CD8-positive, alpha-beta memory T cell (primary cell): ENCODE measurements at regions of chr6 and their contacts with region 1.

Region 1: DNA sequence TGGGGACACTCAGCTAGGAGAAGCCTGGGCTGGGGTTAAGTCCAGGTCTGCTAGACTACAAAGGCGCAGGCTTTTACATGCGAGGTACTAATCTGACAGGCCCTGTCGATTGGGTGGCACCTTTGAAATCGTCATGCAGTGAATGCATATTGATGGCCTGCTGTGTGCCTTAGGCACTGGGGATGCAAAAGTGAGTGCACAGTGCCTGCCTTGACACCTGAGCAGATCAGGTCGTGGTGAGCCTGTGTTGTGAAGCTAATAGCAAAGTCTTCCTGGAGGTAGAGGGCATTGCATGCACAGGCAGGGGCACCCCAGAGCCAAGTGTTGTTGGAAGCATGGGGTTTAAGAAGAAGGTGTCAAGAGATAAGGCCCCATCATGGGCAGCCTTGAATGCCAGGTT is 16.9 kb downstream of the LRRC1 start:
- DNase-seq: no peak
- H3K4me3 ChIP-seq: no peak overlapping the region
- H3K4me3 Mint-ChIP-seq: no peak overlapping the region
- H3K27ac ChIP-seq: no peak overlapping the region
- H3K27ac Mint-ChIP-seq: no peak overlapping the region
- H3K4me1 ChIP-seq: no peaks in the 10 kb centered on the region
- H3K4me1 Mint-ChIP-seq: no peaks in the 10 kb centered on the region
- H3K27me3 ChIP-seq: no peaks in the 10 kb centered on the region
- H3K27me3 Mint-ChIP-seq: peaks cover 0 to 3% of the 10 kb centered on the region in 2 donors

Region 2: DNA sequence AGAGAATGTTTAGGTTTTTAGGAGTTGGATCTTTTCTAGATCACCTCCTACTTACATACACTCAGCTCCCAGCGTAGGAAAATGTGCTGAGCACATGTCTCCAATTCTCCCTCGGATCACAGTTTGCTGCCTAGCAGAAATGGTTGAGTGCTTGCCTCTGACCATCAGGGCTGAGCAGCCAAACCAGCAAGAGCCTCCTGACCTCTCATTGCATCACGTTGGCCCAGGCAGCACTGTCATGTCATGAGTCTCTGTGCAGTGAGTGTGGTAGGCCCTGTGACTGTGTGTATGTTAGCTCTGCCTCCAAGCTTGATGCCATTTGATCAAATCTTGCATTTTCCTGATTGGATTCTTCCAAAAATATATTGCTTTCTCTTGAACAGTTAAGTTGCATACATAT is 95.1 kb after region 1 on chr6:
- CTCF ChIA-PET with region 1: no interaction called
- POLR2A ChIA-PET with region 1: interaction called, 11 read pairs
- DNase-seq: no peak
- H3K4me3 ChIP-seq: no peak overlapping the region
- H3K4me3 Mint-ChIP-seq: no peak overlapping the region
- H3K27ac ChIP-seq: no peak overlapping the region
- H3K27ac Mint-ChIP-seq: no peak overlapping the region
- H3K4me1 ChIP-seq: no peaks in the 10 kb centered on the region
- H3K4me1 Mint-ChIP-seq: no peaks in the 10 kb centered on the region
- H3K27me3 ChIP-seq: no peaks in the 10 kb centered on the region
- H3K27me3 Mint-ChIP-seq: no peaks in the 10 kb centered on the region